Activated CD4-positive, alpha-beta T cell treated with anti-CD3 and anti-CD28 coated beads for 36 hours (primary cell): ENCODE measurements at regions of chr2 and their contacts with region 1.

Region 1: DNA sequence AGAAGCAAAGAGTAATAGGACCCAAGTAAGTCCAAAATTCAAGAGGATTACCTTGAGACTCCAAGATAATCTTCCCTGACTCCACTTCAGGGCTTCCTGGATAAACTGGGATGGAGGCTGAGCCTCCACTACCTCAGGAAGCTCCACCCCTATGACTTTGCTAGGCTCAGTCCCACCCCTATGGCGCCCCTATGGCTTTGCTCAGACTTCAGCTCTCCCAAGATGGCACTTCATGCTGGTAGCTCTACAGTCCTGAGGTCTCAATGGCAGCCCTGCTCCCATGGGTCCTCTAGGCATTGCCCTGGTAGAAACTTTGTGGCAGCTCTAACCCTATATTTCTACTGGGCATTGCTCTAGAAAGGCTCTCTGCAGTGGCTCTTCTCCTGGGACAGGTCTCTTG is 69.9 kb upstream of the CHAC2 start:
- DNase-seq: no peak
- ATAC-seq: no peak
- H3K4me3 Mint-ChIP-seq: no peak overlapping the region
- H3K27ac Mint-ChIP-seq: no peak overlapping the region
- H3K4me1 Mint-ChIP-seq: no peaks in the 10 kb centered on the region
- H3K27me3 Mint-ChIP-seq: no peaks in the 10 kb centered on the region

Region 2: DNA sequence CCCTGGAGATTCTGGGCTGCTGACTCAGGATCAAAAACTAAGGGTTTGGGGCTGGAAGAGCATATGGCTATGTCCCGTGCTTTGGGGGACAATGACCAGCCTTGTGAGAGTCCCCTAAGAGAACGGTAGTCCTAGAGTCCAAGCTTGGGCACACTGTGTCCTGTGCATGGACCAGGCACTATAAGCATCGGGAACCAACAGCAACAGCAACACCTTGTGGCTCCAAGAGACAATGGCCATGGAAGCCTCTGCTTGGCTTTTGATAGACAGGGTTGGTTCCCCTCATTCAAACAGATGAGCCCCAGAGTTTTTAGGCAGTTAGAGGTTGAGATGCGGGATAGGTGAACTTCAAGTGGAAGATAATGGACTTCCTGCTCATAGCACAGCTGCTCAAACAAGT is 224.4 kb before region 1 on chr2:
- CTCF ChIA-PET with region 1: no interaction called
- POLR2A ChIA-PET with region 1: no interaction called
- intact Hi-C with region 1: no loop called
- DNase-seq: no peak
- ATAC-seq: no peak
- H3K4me3 Mint-ChIP-seq: no peak overlapping the region
- H3K27ac Mint-ChIP-seq: no peak overlapping the region
- H3K4me1 Mint-ChIP-seq: no peaks in the 10 kb centered on the region
- H3K27me3 Mint-ChIP-seq: no peaks in the 10 kb centered on the region

Region 3: GRCh38 chr2:55653251-55653650 is 1955.6 kb after region 1 on chr2:
- CTCF ChIA-PET with region 1: no interaction called
- POLR2A ChIA-PET with region 1: no interaction called
- intact Hi-C with region 1: loop called in 1 of 2 experiments (anchors 5 kb)
- DNase-seq: no peak
- ATAC-seq: no peak
- H3K4me3 Mint-ChIP-seq: no peak overlapping the region
- H3K27ac Mint-ChIP-seq: no peak overlapping the region
- H3K4me1 Mint-ChIP-seq: no peaks in the 10 kb centered on the region
- H3K27me3 Mint-ChIP-seq: no peaks in the 10 kb centered on the region